K562 (cell line): ENCODE measurements at regions of chr16 and their contacts with region 1.

Region 1: DNA sequence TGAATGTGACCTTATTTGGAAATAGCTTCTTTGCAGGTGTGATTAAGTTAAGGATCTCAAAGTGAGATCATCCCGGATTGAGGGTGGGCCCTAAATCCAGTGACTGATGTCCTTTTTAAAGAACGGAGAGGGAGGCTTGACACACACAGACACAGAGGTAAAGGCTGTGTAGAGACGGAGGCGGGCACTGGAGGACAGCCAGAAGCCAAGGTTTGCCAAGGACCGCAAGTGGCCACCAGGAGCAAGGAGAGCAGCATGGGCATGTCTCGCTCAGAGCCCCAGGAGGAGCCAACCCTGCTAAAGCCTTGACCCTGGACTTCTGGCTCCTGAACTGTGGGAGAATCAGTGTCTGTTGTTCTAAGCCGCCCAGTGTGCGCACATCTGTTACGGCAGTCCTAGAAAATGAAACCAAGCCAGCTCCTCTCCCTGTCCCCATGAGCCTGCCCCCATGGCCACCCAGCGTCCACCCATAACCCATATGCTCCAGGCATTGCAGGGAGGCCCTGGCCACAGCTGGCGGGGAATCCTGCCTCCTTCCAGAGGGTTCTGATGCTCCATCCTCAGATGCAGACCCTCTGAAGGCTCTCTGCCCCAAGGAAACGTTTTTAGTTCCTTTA is 15.2 kb downstream of the CNGB1 start:
- DNase-seq: no peak
- ATAC-seq: peak; percentile 20
- H3K4me3 ChIP-seq: no peak overlapping the region
- H3K27ac ChIP-seq: no peak overlapping the region
- H3K4me1 ChIP-seq: peaks cover 0 to 19% of the 10 kb centered on the region in 2 experiments; a peak in 3 of 5 replicates
- H3K27me3 ChIP-seq: no peaks in the 10 kb centered on the region; a peak in 1 of 5 replicates
- CTCF ChIP-seq: no peak
- EP300 ChIP-seq: no peak
- POLR2A ChIP-seq: no peak
- RAD21 ChIP-seq: no peak

Region 2: GRCh38 chr16:57976331-57976796 is 20.7 kb after region 1 on chr16:
- CTCF ChIA-PET with region 1: no interaction called
- POLR2A ChIA-PET with region 1: interaction called, 18 read pairs
- in situ Hi-C with region 1: no loop called
- intact Hi-C with region 1: no loop called
- DNase-seq: peak; percentile 93 to 97 (median 94)
- ATAC-seq: peak; percentile 97
- H3K4me3 ChIP-seq: no peak overlapping the region
- H3K27ac ChIP-seq: peak overlapping the region; percentile 74
- H3K4me1 ChIP-seq: peaks cover 28 to 42% of the 10 kb centered on the region in 2 experiments
- H3K27me3 ChIP-seq: no peaks in the 10 kb centered on the region
- CTCF ChIP-seq: no peak
- EP300 ChIP-seq: peak; percentile 92
- POLR2A ChIP-seq: peak; percentile 61
- RAD21 ChIP-seq: no peak